OCI-LY7 (cell line): ENCODE measurements at regions of chr6 and their contacts with region 1.

Region 1: DNA sequence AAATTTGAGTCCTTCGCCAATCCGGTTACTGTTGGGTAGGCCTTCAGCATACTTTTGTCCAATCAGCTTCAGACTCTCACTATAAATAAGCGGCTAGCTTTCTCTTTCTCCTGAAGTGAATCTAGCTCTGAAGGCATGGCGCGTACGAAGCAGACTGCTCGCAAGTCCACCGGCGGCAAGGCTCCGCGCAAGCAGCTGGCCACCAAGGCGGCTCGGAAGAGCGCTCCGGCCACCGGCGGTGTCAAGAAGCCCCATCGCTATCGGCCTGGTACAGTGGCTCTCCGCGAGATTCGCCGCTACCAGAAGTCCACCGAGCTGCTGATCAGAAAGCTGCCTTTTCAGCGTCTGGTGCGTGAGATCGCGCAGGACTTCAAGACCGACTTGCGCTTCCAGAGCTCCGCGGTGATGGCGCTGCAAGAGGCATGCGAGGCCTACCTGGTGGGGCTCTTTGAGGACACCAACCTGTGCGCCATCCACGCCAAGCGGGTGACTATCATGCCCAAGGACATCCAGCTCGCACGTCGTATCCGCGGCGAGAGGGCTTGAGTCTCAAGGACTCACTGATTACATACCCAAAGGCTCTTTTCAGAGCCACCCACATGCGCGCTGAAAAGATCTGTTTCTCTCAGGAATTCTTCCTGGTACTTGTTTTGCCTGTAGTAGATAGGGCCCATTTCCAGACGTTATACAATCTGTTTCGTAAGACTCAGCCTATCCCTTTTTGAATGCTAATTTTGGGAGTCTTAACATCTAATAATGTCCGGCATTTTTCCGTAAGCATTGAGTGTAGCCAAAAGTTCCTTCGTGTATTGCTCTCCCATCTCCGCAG is 102.0 kb downstream of the OR2B2 start:
- DNase-seq: peak; percentile 96
- H3K4me3 ChIP-seq: peak overlapping the region; percentile 82
- H3K27ac ChIP-seq: peak overlapping the region; percentile 96
- H3K4me1 ChIP-seq: peaks cover 62% of the 10 kb centered on the region
- CTCF ChIP-seq: peak; percentile 12; the same call in 1 of the 2 replicates

Region 2: GRCh38 chr6:26363882-26364701 is 1446.1 kb before region 1 on chr6:
- CTCF ChIA-PET with region 1: no interaction called
- POLR2A ChIA-PET with region 1: no interaction called
- intact Hi-C with region 1: loop called (anchors 5 kb)
- DNase-seq: peak; percentile 52
- H3K4me3 ChIP-seq: peak overlapping the region; percentile 77
- H3K27ac ChIP-seq: peak overlapping the region; percentile 96
- H3K4me1 ChIP-seq: peaks cover 70% of the 10 kb centered on the region
- CTCF ChIP-seq: no peak

Region 3: GRCh38 chr6:27138837-27139755 is 671.1 kb before region 1 on chr6:
- CTCF ChIA-PET with region 1: no interaction called
- POLR2A ChIA-PET with region 1: interaction called, 170 read pairs
- intact Hi-C with region 1: no loop called
- DNase-seq: peak; percentile 95
- H3K4me3 ChIP-seq: peak overlapping the region; percentile 77
- H3K27ac ChIP-seq: peak overlapping the region; percentile 99
- H3K4me1 ChIP-seq: peaks cover 78% of the 10 kb centered on the region
- CTCF ChIP-seq: no peak

Region 4: DNA sequence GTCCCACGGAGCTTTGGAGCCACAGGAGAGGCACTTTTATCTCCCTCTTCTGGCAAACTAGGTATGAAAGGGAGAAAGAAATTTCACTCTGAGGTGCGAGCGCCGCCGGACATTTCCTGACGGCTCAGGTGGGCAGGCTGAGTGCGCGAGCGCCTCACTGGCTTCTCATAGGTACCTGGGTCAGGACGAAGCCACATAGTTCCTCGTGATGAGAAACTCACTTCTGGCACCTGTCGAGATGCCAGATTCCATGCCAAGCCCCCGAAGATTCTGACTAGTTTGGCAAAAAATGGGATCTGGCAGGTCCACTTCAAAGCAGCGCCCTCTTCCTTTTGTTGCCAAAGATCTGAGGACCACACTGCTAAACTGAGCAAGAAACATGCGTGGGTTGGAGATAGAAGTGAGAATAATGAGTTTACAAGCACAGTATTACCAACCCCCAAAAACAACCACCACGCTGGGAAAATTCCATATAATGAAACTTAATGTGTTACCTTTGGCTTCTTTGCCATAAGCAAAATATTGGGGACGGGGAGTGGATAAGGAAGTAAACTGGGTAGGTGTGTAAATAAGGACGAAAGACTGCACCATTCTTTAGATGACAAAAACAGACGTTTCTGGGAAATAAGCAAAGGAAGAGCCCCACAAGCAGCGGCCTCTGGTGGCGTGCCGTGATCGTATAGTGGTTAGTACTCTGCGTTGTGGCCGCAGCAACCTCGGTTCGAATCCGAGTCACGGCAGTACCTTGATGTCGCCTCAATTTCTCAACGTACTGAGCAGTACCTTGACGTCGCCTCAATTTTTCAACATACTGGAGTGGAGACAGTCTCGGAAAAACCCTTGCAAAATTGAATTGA is 652.5 kb before region 1 on chr6:
- CTCF ChIA-PET with region 1: no interaction called
- POLR2A ChIA-PET with region 1: interaction called, 61 read pairs
- intact Hi-C with region 1: loop called (anchors 2 kb)
- DNase-seq: peak; percentile 61
- H3K4me3 ChIP-seq: peak overlapping the region; percentile 56
- H3K27ac ChIP-seq: peak overlapping the region; percentile 28
- H3K4me1 ChIP-seq: peaks cover 45% of the 10 kb centered on the region
- CTCF ChIP-seq: peak; percentile 55

Region 5: DNA sequence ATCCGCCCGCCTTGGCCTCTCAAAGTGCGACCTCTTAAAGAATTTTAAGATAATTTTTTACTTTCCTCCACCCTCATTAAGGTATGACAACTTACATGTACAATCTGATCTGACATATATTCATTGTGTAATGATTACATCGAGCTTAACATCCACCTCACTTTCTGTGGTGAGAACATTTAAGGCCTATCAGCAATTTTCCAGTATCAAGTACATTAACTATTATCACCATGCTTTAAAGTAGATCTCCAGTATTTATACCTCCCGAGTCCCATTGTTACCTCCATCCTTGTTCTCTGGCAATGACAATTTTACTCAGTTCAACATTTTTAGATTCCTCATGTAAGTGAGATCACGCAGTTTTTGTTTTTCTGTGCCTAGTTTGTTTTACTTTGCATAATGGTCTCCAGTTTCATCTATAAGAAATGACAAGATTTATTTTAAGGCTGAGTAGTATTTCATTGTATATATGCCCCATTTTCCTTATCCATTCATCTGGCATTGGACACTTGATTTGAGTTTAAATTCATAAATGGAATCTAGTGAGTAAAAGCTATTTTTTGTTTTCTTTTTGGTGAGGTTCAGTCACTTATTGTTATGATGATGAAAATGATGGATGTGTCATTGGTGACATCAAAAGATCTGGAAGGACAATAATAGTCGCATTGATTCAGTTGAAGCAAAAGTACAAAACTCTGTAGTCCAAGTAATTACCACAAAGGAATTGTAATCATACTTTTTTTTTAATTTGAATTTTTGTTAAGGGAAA is 15.1 kb after region 1 on chr6:
- CTCF ChIA-PET with region 1: no interaction called
- POLR2A ChIA-PET with region 1: interaction called, 116 read pairs
- intact Hi-C with region 1: loop called (anchors 2 kb)
- DNase-seq: peak; percentile 72
- H3K4me3 ChIP-seq: peak overlapping the region; percentile 71
- H3K27ac ChIP-seq: peak overlapping the region; percentile 93
- H3K4me1 ChIP-seq: peaks cover 46% of the 10 kb centered on the region
- CTCF ChIP-seq: no peak

Region 6: GRCh38 chr6:27864906-27865849 is 55.0 kb after region 1 on chr6:
- CTCF ChIA-PET with region 1: interaction called, 3 read pairs
- POLR2A ChIA-PET with region 1: interaction called, 380 read pairs
- intact Hi-C with region 1: no loop called
- DNase-seq: peak; percentile 99
- H3K4me3 ChIP-seq: peak overlapping the region; percentile 67
- H3K27ac ChIP-seq: peak overlapping the region; percentile 99
- H3K4me1 ChIP-seq: peaks cover 60% of the 10 kb centered on the region
- CTCF ChIP-seq: no peak

Region 7: DNA sequence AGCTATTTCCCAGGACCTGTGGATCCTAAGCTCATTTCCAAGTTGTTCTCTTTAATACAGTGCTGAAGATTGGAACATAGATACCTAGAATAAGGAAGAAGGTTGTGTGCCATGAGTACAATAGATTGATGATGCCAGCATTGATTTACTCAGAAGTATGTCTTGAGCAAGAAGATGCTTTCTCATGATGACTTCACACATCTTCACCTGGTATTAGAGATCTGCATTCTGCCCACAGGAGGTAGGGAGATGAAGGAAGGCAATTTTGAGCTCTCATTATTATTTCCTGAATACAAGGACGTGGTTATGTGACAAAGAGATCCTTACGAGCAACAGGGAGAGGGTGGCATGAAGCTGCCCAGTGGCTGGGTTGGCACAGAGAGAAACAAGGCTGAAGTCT is 250.3 kb after region 1 on chr6:
- CTCF ChIA-PET with region 1: no interaction called
- POLR2A ChIA-PET with region 1: no interaction called
- intact Hi-C with region 1: no loop called
- DNase-seq: no peak
- H3K4me3 ChIP-seq: no peak overlapping the region
- H3K27ac ChIP-seq: no peak overlapping the region
- H3K4me1 ChIP-seq: no peaks in the 10 kb centered on the region
- CTCF ChIP-seq: no peak